ENCODE measurements at regions of chr1 and their contacts with region 1.

Region 1: DNA sequence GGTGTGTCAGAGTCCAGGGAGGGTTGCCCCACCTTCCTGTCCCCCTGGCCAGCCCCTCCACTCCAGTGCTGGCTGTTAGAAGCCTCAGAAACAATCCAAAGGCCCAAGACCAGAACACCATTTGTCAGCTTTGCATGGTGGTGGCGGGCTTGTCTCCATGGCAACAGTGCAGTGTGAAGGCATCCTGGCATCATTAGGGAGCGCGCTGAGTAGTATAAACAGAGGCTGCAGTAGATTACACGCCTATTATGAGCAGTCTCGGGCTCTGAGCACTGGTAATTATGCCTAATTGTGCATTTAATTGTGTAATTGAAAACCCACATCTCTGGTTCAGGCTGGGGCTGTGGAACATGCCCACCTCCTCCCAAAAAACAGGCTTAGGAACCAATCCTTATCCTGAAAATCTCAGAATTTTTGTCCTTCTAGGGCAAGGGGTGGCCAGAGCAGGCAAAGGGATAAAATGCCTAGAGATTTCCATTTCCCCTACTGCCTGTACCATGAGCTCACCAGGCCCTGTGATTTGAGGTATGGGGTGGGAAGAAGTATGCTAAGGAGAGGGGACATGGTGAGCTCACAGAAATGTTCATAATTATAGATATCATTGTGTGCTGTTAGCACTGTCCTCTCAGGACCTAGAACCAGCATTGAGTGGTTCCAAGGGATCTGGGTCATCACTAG is 11.7 kb downstream of the NKAIN1 start:
- DNase-seq: no peak
- H3K4me3 ChIP-seq: no peak overlapping the region
- H3K27ac ChIP-seq: no peak overlapping the region
- H3K4me1 ChIP-seq: no peaks in the 10 kb centered on the region; a peak in 1 of 7 replicates
- H3K27me3 ChIP-seq: no peaks in the 10 kb centered on the region
- CTCF ChIP-seq: no peak
- EP300 ChIP-seq: no peak
- POLR2A ChIP-seq: no peak
- RAD21 ChIP-seq: no peak

Region 2: DNA sequence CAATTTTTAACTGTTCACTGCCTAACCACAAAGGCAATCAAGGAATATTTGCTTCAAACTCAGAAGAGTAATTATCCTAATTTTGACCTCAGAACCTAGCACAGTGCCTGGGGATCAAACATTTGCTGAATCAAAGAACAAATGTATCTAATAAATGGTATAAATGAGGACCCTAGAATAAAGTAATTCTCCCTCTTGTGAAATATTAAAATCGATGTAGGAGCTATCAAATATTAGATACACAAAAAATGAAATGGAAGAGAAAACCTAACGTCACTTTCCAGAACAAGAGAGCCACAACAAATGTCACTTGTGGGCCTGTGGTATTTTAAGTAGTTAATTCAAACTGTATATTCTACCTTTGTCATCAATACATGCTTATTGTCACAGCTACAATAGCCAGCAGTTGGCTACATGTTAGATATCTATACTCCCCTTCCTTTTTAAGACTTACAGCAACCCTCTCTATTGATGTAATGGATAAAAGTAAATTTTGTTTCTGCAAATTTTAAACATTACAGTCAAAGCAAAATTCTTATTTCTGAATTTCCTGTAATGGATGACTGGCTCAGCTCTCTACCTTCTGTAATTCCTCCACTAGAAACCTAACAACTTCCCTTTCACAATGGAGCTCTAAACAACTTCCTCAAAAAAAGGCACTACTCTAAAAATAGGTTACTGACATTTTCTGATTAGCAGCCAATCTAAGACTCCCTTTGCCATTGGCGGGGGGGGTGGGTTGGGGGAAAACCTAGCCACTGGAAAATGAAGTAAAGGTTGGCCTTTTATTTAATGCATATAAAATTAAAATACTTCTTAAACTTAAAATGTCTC is 200.1 kb before region 1 on chr1:
- CTCF ChIA-PET with region 1: no interaction called
- POLR2A ChIA-PET with region 1: no interaction called
- DNase-seq: no peak
- H3K4me3 ChIP-seq: no peak overlapping the region
- H3K27ac ChIP-seq: no peak overlapping the region
- H3K4me1 ChIP-seq: peaks cover 0 to 11% (median 3%) of the 10 kb centered on the region in 4 experiments; a peak in 2 of 7 replicates
- H3K27me3 ChIP-seq: no peaks in the 10 kb centered on the region
- CTCF ChIP-seq: no peak
- EP300 ChIP-seq: no peak
- POLR2A ChIP-seq: no peak
- RAD21 ChIP-seq: no peak

Region 3: DNA sequence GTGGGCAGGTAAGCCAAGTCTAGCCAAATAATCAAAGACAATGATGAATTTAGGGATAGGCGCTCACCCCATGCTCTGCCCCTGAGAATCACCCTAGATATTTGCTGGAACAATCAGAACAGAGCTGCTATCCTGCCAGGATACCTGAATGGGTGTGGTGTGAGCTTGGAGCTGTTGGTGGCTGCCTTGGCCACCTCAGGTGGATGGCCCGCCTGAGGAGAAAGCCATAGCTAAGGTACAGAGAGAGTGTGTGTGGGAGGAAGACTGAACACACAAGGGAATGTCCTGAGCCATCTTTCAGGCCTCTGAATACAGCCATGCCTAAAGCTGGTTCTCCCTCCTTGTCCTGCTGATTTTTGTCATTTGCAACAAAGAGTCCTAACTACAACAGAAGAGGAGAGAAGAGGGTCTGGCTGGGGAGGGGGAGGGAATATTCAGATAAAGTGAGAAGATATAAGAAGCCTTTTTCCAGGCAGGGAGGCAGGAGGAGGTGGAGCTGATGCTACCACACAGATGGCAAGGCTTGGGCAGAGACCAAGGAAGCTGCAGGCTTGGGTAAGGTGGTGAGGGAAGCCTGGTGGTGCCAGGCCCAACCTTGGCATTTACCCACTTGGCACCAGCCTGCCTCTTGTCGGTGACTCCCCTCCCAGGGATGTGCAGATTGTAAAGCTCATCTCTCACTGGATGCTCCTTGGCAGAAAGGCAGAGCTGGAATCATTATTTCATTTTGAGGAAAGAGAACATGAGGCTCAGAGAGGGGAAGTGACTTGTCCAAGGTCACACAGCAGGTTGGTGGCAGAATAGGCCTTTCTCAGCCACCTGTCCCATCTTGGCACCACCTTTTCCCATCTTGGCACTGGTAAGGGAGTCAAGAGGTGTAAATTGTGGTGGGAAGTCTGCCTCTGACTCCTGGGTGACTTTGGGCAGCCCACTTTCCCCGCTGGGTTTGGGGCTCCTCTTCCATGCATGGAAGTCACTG is 38.0 kb before region 1 on chr1:
- CTCF ChIA-PET with region 1: interaction called, 146 read pairs
- POLR2A ChIA-PET with region 1: no interaction called
- DNase-seq: no peak
- H3K4me3 ChIP-seq: no peak overlapping the region
- H3K27ac ChIP-seq: no peak overlapping the region
- H3K4me1 ChIP-seq: peaks cover 0 to 3% (median 0%) of the 10 kb centered on the region in 4 experiments; a peak in 2 of 7 replicates
- H3K27me3 ChIP-seq: no peaks in the 10 kb centered on the region
- CTCF ChIP-seq: no peak
- EP300 ChIP-seq: no peak
- POLR2A ChIP-seq: no peak
- RAD21 ChIP-seq: no peak

Region 4: GRCh38 chr1:31216016-31216415 is 12.0 kb before region 1 on chr1:
- CTCF ChIA-PET with region 1: interaction called, 14 read pairs
- POLR2A ChIA-PET with region 1: interaction called, 7 read pairs
- DNase-seq: no peak
- H3K4me3 ChIP-seq: no peak overlapping the region
- H3K27ac ChIP-seq: no peak overlapping the region
- H3K4me1 ChIP-seq: peaks cover 0 to 9% (median 2%) of the 10 kb centered on the region in 4 experiments; a peak in 5 of 7 replicates
- H3K27me3 ChIP-seq: no peaks in the 10 kb centered on the region
- CTCF ChIP-seq: no peak
- EP300 ChIP-seq: no peak
- POLR2A ChIP-seq: no peak
- RAD21 ChIP-seq: no peak

Region 5: DNA sequence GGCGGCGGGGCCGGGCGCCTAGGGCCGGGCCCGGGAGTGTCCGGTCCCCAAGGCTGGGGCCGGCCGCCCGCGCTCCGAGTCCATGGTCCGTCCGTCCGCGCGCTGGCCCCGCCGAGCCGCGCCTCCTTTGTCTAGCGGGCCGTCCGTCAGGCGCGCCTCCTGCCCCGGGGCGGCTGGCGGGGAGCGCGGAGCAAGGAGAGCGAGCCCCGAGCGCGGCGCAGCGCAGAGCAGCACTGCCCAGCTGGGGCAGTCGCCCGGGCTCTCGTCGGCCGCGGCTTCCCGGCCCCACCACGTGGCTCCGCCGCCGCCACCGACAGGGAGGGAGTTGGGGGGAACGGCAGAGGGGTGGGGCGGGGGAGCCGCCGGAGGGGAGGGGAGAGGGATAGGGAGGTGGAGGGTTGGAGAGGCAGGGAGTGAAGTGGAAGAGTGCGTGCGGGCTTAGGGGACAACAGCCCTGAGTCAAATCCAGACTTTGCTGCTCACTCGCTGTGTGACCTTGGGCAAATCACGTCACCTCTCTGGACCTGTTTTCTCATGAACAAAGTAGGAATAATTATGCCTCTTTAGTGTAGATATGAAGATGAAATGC is 11.7 kb after region 1 on chr1 and contains the start of gene NKAIN1:
- CTCF ChIA-PET with region 1: interaction called, 5 read pairs
- POLR2A ChIA-PET with region 1: interaction called, 14 read pairs
- DNase-seq: peak; percentile 19 to 75
- H3K4me3 ChIP-seq: peak within 1 kb of the TSS; percentile 75 to 79 (median 78)
- H3K27ac ChIP-seq: no peak within 1 kb of the TSS
- H3K4me1 ChIP-seq: peaks cover 5 to 12% (median 6%) of the 10 kb centered on the region in 4 experiments; a peak in 6 of 7 replicates
- H3K27me3 ChIP-seq: peaks cover 0 to 22% (median 12%) of the 10 kb centered on the region in 4 experiments; a peak in 5 of 7 replicates
- CTCF ChIP-seq: no peak
- EP300 ChIP-seq: no peak
- POLR2A ChIP-seq: peak in 1 of 2 experiments; percentile 63; a peak in 1 of 3 replicates
- RAD21 ChIP-seq: no peak
- total RNA-seq, gene NKAIN1: 59.1 and 59.3 TPM in 2 replicates

Measured in H1 (cell line).